Activated CD4-positive, alpha-beta memory T cell treated with anti-CD3 and anti-CD28 coated beads, Interleukin-2, amount 10 ng/mL, durations not matched to agents 7 days and 5 days (primary cell): ENCODE measurements at regions of chr2 and their contacts with region 1.

Region 1: GRCh38 chr2:58448065-58448507 is 207.0 kb upstream of the FANCL start:
- DNase-seq: peak; percentile 29
- H3K4me3 Mint-ChIP-seq: no peak overlapping the region
- H3K27ac Mint-ChIP-seq: no peak overlapping the region
- H3K4me1 Mint-ChIP-seq: no peaks in the 10 kb centered on the region
- H3K27me3 Mint-ChIP-seq: peaks cover 7% of the 10 kb centered on the region

Region 2: DNA sequence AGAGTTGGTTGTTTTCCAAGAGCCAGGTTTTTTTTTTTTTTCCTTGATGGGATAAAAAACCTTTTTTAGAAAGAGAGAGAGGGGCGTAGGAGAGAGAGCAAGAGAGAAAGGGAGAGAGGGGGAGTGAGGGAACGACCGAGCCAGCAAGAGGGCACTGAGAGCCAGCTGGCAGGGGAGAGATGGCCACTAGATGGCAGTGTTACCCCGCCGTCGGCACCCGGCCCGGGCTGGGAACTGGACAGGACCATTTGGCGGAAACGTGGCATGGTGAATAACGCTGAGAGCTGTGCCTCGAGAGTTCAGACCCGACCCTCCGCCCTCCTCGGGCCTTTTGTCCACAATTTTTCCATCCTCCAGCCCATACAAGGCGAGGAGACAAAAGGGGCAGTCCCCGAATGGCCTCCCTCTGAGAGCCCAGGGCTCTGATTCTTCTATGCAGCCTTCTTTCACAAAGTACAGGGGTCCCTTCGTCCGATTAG is 688.2 kb before region 1 on chr2:
- CTCF ChIA-PET with region 1: interaction called, 13 read pairs
- POLR2A ChIA-PET with region 1: no interaction called
- DNase-seq: peak; percentile 73
- H3K4me3 Mint-ChIP-seq: no peak overlapping the region
- H3K27ac Mint-ChIP-seq: no peak overlapping the region
- H3K4me1 Mint-ChIP-seq: no peaks in the 10 kb centered on the region
- H3K27me3 Mint-ChIP-seq: peaks cover 1% of the 10 kb centered on the region